ENCODE measurements at regions of chr19 and their contacts with region 1.

Region 1: DNA sequence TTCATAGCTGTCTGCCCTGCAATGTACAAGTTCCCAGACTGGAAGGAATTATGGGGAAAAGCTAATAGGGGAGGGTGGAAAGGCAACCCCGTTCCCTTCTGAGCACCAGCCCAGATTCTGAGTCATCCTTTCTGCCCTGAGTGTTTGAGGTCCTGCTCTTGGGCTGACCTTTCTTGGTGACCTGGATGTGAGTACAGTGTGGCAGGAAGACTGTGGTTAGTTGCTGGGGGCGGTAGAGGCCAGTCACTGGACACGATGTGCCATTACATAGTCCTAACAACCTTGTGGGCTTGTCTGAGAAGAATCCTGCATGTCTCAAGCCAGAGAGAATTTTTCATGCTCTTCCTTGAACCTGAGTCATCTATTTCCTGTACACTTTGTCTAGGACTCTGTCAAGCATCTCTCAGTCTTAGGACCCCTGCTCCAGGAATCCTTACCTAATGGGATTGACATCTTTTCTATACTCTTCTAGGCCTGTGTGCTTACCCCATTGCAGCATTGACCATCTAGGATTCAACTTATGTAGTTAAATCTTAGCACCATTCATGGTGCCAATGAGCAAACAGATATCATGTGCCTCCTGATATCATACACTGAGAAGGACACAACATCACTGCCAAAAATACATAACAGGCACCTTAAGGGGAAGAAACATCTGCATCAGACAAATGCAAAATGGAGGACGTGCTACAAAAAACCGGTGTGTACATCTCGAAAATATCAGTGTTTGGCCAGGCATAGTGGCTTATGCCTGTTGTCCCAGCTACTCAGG is 8.1 kb upstream of the ANGPTL4 start:
- DNase-seq: no peak
- H3K4me3 ChIP-seq: no peak overlapping the region
- H3K27ac ChIP-seq: peak overlapping the region; percentile 3
- H3K4me1 ChIP-seq: peaks cover 9% of the 10 kb centered on the region
- H3K27me3 ChIP-seq: no peaks in the 10 kb centered on the region
- CTCF ChIP-seq: no peak
- POLR2A ChIP-seq: no peak

Region 2: GRCh38 chr19:8389891-8390616 is 34.2 kb after region 1 on chr19 and contains the start of gene RAB11B:
- intact Hi-C with region 1: loop called (anchors 5 kb)
- DNase-seq: peak; percentile 99 to 100
- H3K4me3 ChIP-seq: peak within 1 kb of the TSS; percentile 89 to 98
- H3K27ac ChIP-seq: peak within 1 kb of the TSS; percentile 100
- H3K4me1 ChIP-seq: peaks cover 53% of the 10 kb centered on the region
- H3K27me3 ChIP-seq: no peaks in the 10 kb centered on the region
- CTCF ChIP-seq: no peak
- POLR2A ChIP-seq: peak in 1 of 2 donors; percentile 60
- total RNA-seq, gene RAB11B: 88.1 TPM

Region 3: DNA sequence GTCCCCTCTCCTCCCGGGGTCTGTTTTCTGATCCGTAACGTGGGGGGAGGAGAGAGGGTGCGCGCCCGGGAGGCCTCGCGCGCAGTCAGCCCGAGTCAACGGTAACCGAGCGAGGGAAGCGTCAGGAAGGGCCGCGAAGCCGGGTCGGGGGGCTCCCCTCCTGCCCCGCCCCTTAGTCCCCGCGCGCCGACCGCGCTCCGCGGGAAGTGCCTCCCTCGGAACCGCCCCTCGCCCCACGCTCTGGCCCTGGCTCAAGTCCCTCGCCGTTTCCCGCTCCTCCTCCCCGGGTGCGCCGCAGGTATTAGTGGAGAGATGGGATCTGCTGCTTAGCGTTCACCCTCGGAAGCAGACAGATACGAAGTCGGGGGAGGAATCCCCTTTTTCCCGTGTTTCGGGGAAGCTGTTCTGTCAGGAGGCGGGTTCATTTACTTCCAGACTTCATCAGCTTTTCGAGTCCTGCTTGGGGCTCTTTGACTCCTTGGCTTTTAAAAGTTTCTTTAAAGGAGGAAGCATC is 89.7 kb after region 1 on chr19:
- intact Hi-C with region 1: loop called (anchors 2 kb)
- DNase-seq: no peak
- H3K4me3 ChIP-seq: peak overlapping the region; percentile 78 to 83
- H3K27ac ChIP-seq: peak overlapping the region; percentile 96
- H3K4me1 ChIP-seq: peaks cover 56% of the 10 kb centered on the region
- H3K27me3 ChIP-seq: no peaks in the 10 kb centered on the region
- CTCF ChIP-seq: no peak
- POLR2A ChIP-seq: no peak

Region 4: DNA sequence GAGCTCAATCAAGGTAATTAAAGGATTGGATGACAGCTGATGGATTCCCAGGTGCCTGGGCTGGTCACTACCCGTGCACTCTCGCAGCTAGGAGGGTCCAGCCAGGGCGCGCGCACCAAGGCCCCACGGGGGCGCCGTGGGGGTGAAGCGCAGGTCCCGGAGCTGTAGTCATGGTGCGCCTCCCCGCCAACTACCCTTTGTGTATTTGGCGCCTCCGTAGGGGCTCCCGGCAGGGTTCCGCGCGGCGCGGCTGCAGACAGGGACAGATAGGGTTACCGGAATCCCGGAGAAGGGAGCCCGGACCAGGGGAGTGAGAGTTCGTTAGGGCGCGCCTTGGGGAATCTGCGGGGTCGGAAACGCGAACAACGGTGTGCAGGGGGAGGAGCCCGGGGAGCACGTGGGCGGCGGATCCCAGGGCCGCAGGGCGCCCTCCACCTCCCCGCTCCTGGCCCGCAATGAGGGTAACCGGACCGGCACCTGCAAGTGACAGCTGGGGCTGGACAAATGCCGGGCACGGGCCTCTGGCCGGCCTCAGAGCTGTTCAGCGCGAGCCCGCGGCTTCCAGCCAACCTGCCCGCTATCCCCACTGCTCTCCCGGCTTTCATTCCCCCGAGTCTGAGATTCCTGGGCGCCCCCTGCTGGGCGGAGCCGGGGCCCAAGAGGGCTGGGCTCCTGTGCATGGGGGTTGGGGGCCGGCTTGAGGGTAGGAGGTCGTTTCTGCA is 150.0 kb after region 1 on chr19:
- intact Hi-C with region 1: loop called (anchors 10 kb)
- DNase-seq: no peak
- H3K4me3 ChIP-seq: peak overlapping the region; percentile 56 to 68
- H3K27ac ChIP-seq: peak overlapping the region; percentile 54
- H3K4me1 ChIP-seq: peaks cover 14% of the 10 kb centered on the region
- H3K27me3 ChIP-seq: no peaks in the 10 kb centered on the region
- CTCF ChIP-seq: peak; percentile 56 to 98 (median 77)
- POLR2A ChIP-seq: no peak

Region 5: GRCh38 chr19:8592231-8593009 is 236.6 kb after region 1 on chr19:
- intact Hi-C with region 1: no loop called
- DNase-seq: peak in 1 of 2 donors; percentile 97
- H3K4me3 ChIP-seq: peak overlapping the region; percentile 39 to 51
- H3K27ac ChIP-seq: peak overlapping the region; percentile 32
- H3K4me1 ChIP-seq: peaks cover 24% of the 10 kb centered on the region
- H3K27me3 ChIP-seq: no peaks in the 10 kb centered on the region
- CTCF ChIP-seq: no peak
- POLR2A ChIP-seq: peak in 1 of 2 donors; percentile 17